Aorta (tissue), 5 donors: ENCODE measurements at regions of chr2 and their contacts with region 1.

Region 1: GRCh38 chr2:188788621-188789020 is 185.6 kb upstream of the COL3A1 start:
- DNase-seq: peak; percentile 80
- ATAC-seq: peak; percentile 72
- H3K4me3 ChIP-seq: no peak overlapping the region
- H3K27ac ChIP-seq: no peak overlapping the region
- H3K4me1 ChIP-seq: peaks cover 0 to 3% of the 10 kb centered on the region in 2 donors
- H3K27me3 ChIP-seq: no peaks in the 10 kb centered on the region

Region 2: DNA sequence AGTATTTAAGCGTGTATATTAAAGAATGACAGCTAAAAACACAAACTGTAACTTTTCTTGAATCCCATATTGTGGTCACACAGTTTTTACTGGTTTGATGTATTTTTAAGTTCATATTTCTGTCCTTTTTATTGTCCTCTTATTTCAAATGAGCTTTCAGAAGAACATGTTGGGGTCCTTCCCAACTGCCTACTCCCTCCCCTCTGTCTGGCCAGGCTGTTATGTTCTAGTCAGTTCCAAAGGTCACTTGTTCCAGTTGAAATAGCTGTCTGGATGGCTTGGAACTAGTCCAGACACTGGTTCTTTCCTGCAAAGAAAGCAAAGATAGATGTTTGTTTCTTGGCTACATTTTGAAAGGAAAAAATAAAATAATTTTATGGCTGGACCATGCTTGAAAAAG is 190.1 kb before region 1 on chr2:
- intact Hi-C with region 1: loop called in 1 of 2 experiments (anchors 5 kb)
- DNase-seq: no peak
- ATAC-seq: no peak
- H3K4me3 ChIP-seq: no peak overlapping the region
- H3K27ac ChIP-seq: peak overlapping the region in 1 of 2 donors; percentile 67
- H3K4me1 ChIP-seq: peaks cover 0 to 4% of the 10 kb centered on the region in 2 donors
- H3K27me3 ChIP-seq: no peaks in the 10 kb centered on the region

Region 3: GRCh38 chr2:188765522-188766470 is 22.8 kb before region 1 on chr2:
- intact Hi-C with region 1: no loop called
- DNase-seq: no peak
- ATAC-seq: peak; percentile 46
- H3K4me3 ChIP-seq: no peak overlapping the region
- H3K27ac ChIP-seq: no peak overlapping the region
- H3K4me1 ChIP-seq: no peaks in the 10 kb centered on the region
- H3K27me3 ChIP-seq: no peaks in the 10 kb centered on the region